ENCODE measurements at regions of chr16 and their contacts with region 1.

Region 1: DNA sequence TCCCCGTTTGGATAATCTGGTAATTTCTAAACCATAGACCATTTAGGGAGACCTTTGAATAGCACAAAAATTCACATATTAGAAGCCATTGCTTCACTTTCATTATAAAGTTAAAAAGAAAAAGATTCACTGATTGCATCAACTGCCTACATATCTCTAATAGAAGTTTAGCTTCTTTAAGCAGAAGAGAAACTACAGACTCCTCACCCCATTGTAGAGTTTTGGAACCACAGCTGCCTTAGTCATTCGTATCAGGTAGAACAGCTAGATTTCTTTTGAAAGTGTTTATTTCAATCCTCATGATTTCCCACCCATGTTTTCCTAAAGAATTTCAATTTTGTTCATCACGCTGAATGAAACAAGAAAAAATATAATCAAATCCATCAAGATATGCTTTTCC is 144.8 kb downstream of the CDH8 start:
- DNase-seq: no peak
- ATAC-seq: no peak
- H3K4me3 ChIP-seq: no peak overlapping the region
- H3K27ac ChIP-seq: no peak overlapping the region
- H3K4me1 ChIP-seq: no peaks in the 10 kb centered on the region
- H3K27me3 ChIP-seq: no peaks in the 10 kb centered on the region
- CTCF ChIP-seq: no peak
- POLR2A ChIP-seq: no peak

Region 2: DNA sequence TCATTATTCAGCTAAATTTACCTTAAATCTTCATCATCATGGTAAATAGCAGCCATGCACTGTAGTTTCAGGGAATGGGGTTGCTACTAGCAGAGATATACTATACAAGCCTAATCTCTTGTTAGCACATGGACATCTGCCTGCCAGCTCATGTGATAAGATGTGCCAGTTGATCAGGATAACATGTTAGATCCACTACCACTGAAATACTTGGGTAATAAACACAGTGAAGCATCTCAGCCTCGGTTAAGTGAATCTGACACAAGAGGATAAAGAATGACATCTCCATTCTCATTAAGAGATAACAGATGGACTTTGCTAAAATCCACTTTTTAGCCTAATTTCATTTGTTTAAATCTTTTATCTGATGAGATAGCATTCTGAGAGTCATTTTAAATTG is 111.3 kb before region 1 on chr16:
- intact Hi-C with region 1: no loop called
- DNase-seq: no peak
- ATAC-seq: no peak
- H3K4me3 ChIP-seq: no peak overlapping the region
- H3K27ac ChIP-seq: no peak overlapping the region
- H3K4me1 ChIP-seq: no peaks in the 10 kb centered on the region
- H3K27me3 ChIP-seq: no peaks in the 10 kb centered on the region
- CTCF ChIP-seq: no peak
- POLR2A ChIP-seq: no peak

Region 3: GRCh38 chr16:61957075-61957855 is 65.8 kb after region 1 on chr16:
- intact Hi-C with region 1: loop called in 1 of 2 experiments (anchors 10 kb)
- DNase-seq: no peak
- ATAC-seq: no peak
- H3K4me3 ChIP-seq: no peak overlapping the region
- H3K27ac ChIP-seq: no peak overlapping the region
- H3K4me1 ChIP-seq: no peaks in the 10 kb centered on the region
- H3K27me3 ChIP-seq: no peaks in the 10 kb centered on the region
- CTCF ChIP-seq: no peak
- POLR2A ChIP-seq: no peak

Region 4: GRCh38 chr16:62256406-62256805 is 364.9 kb after region 1 on chr16:
- intact Hi-C with region 1: no loop called
- DNase-seq: no peak
- ATAC-seq: no peak
- H3K4me3 ChIP-seq: no peak overlapping the region
- H3K27ac ChIP-seq: no peak overlapping the region
- H3K4me1 ChIP-seq: no peaks in the 10 kb centered on the region
- H3K27me3 ChIP-seq: no peaks in the 10 kb centered on the region
- CTCF ChIP-seq: peak in 3 of 4 donors; percentile 24 to 41 (median 35)
- POLR2A ChIP-seq: no peak

Measured in right lobe of liver (tissue), 6 donors.